Right cardiac atrium (tissue), 5 donors: ENCODE measurements at regions of chr6 and their contacts with region 1.

Region 1: GRCh38 chr6:40308533-40309306 is 278.4 kb downstream of the LRFN2 start:
- DNase-seq: peak in 2 of 3 donors; percentile 29 to 61
- ATAC-seq: peak; percentile 52 to 68
- H3K4me3 ChIP-seq: no peak overlapping the region
- H3K27ac ChIP-seq: no peak overlapping the region
- H3K4me1 ChIP-seq: no peaks in the 10 kb centered on the region
- H3K27me3 ChIP-seq: no peaks in the 10 kb centered on the region

Region 2: GRCh38 chr6:39361657-39362486 is 946.8 kb before region 1 on chr6:
- intact Hi-C with region 1: loop called in 1 of 4 experiments (anchors 10 kb)
- DNase-seq: peak; percentile 61 to 79 (median 78)
- ATAC-seq: peak; percentile 80 to 81
- H3K4me3 ChIP-seq: no peak overlapping the region
- H3K27ac ChIP-seq: no peak overlapping the region
- H3K4me1 ChIP-seq: no peaks in the 10 kb centered on the region
- H3K27me3 ChIP-seq: no peaks in the 10 kb centered on the region

Region 3: DNA sequence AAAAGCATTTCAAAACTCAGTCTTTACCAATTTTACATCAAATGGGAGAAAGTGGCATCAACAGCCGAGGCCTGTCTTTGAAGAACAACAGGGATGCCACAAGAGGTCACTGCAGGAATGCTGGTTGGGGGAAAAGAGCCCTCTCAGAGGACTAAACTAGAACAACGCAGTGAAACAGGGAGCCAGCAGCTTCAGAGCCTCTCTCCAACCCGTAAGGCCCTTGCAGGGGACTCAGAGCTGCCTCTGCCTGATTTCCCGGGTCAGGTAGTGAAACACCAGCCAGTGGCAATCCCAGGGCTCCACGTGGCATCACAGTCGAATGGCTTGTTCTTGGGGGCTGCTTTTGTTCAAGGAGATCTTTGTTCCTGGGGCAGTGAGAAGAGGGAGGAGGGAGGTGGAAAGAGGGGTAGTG is 931.2 kb before region 1 on chr6:
- intact Hi-C with region 1: loop called in 1 of 4 experiments (anchors 5 kb)
- DNase-seq: peak; percentile 58 to 72 (median 68)
- ATAC-seq: peak; percentile 87 to 93
- H3K4me3 ChIP-seq: no peak overlapping the region
- H3K27ac ChIP-seq: no peak overlapping the region
- H3K4me1 ChIP-seq: no peaks in the 10 kb centered on the region
- H3K27me3 ChIP-seq: no peaks in the 10 kb centered on the region

Region 4: DNA sequence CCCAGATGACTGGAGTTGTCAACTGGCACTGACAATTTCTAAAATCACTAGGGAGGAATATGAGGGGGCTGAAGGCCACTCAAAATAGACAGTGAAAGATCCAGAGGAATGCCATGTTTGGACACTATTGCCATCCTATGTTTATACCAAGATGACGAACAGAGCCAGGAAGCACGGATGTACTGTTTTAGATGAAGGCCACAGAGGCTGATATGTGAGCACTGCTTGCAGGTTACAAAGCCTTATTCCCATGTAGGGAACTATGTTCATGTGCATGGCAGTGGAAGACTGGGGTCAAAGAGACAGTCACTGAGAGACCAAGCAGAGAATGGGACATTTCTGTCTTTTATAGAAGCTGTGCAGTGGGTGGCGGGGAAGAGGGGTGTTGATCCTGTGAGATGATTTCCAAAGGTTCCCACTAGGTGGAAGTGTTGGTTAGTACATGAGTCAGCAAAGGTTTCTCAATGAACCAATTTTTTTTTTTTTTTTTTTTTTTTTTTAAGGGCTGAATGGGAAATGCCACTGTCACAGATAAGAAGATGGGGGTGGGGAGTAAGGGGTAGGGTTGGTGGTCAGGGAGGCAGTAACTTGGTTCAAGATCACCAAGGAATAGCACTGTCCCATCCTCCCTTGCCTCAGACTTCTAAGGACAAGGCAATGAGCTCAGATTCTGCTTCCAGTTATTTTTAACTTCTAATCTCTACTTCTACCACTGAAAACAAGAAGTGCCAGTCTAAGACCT is 327.7 kb before region 1 on chr6:
- intact Hi-C with region 1: loop called (anchors 2 to 10 kb)
- DNase-seq: peak in 1 of 3 donors; percentile 48
- ATAC-seq: peak; percentile 76 to 84
- H3K4me3 ChIP-seq: no peak overlapping the region
- H3K27ac ChIP-seq: no peak overlapping the region
- H3K4me1 ChIP-seq: no peaks in the 10 kb centered on the region
- H3K27me3 ChIP-seq: no peaks in the 10 kb centered on the region